Posterior vena cava (tissue), 2 donors: ENCODE measurements at regions of chr7 and their contacts with region 1.

Region 1: GRCh38 chr7:21596801-21597200 is 54.0 kb downstream of the DNAH11 start:
- DNase-seq: no peak

Region 2: GRCh38 chr7:19747740-19748339 is 1849.0 kb before region 1 on chr7:
- intact Hi-C with region 1: no loop called
- DNase-seq: no peak

Region 3: DNA sequence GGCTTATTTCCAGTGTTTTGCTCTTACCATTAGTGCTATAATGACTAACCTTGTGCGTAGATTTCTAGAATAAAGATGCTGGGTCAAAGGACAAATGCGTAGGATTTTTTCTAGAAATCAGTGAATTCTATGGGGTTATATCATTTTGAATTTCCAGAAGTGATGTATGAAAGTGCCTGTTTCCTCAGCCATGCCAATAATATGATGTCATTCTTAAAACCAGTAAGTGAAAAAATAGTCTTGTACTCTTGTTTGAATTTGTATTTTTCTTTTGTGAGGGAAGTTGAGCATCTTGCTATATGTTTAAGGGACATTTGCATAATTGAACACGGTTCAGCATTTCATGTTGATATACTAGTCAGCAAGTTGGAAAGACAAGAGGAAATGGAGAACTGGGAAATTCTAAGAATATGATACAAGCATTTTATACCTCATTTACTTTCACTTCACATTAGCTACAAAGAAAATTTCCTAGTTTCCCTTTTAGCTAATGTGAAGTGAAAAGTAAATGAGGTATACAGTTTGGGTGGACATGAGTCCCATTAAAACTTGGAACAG is 57.8 kb before region 1 on chr7:
- intact Hi-C with region 1: no loop called
- DNase-seq: no peak

Region 4: GRCh38 chr7:21579341-21580072 is 17.3 kb before region 1 on chr7:
- intact Hi-C with region 1: loop called (anchors 1 to 2 kb)
- DNase-seq: no peak